G401 (cell line): ENCODE measurements at regions of chr4 and their contacts with region 1.

Region 1: GRCh38 chr4:2364654-2365053 is 53.8 kb downstream of the ZFYVE28 start:
- DNase-seq: no peak

Region 2: GRCh38 chr4:2305766-2306501 is 58.7 kb before region 1 on chr4:
- in situ Hi-C with region 1: loop called (anchors 10 kb)
- DNase-seq: no peak